ENCODE measurements at regions of chr4 and their contacts with region 1.

Region 1: GRCh38 chr4:95095348-95095974 is 337.7 kb downstream of the BMPR1B start:
- DNase-seq: peak; percentile 71
- ATAC-seq: peak; percentile 19; the same call in 1 of the 2 replicates
- H3K4me3 ChIP-seq: no peak overlapping the region
- H3K27ac ChIP-seq: peak overlapping the region; percentile 97
- H3K4me1 ChIP-seq: peaks cover 48% of the 10 kb centered on the region
- H3K27me3 ChIP-seq: no peaks in the 10 kb centered on the region
- CTCF ChIP-seq: peak; percentile 78

Region 2: GRCh38 chr4:94621491-94622080 is 473.9 kb before region 1 on chr4:
- CTCF ChIA-PET with region 1: no interaction called
- POLR2A ChIA-PET with region 1: no interaction called
- intact Hi-C with region 1: loop called (anchors 1 kb)
- DNase-seq: peak; percentile 67
- ATAC-seq: peak; percentile 24; the same call in 1 of the 2 replicates
- H3K4me3 ChIP-seq: no peak overlapping the region
- H3K27ac ChIP-seq: no peak overlapping the region
- H3K4me1 ChIP-seq: peaks cover 4% of the 10 kb centered on the region; the same call in 1 of the 2 replicates
- H3K27me3 ChIP-seq: no peaks in the 10 kb centered on the region
- CTCF ChIP-seq: peak; percentile 74

Region 3: GRCh38 chr4:94757192-94758139 is 338.0 kb before region 1 on chr4 and contains the start of gene BMPR1B:
- CTCF ChIA-PET with region 1: no interaction called
- POLR2A ChIA-PET with region 1: no interaction called
- intact Hi-C with region 1: loop called (anchors 2 kb)
- DNase-seq: peak; percentile 65
- ATAC-seq: peak; percentile 10; the same call in 1 of the 2 replicates
- H3K4me3 ChIP-seq: peak within 1 kb of the TSS; percentile 94
- H3K27ac ChIP-seq: peak within 1 kb of the TSS; percentile 78
- H3K4me1 ChIP-seq: peaks cover 23% of the 10 kb centered on the region
- H3K27me3 ChIP-seq: no peaks in the 10 kb centered on the region
- CTCF ChIP-seq: no peak
- total RNA-seq, gene BMPR1B: 5.0 and 7.1 TPM in 2 replicates

Region 4: DNA sequence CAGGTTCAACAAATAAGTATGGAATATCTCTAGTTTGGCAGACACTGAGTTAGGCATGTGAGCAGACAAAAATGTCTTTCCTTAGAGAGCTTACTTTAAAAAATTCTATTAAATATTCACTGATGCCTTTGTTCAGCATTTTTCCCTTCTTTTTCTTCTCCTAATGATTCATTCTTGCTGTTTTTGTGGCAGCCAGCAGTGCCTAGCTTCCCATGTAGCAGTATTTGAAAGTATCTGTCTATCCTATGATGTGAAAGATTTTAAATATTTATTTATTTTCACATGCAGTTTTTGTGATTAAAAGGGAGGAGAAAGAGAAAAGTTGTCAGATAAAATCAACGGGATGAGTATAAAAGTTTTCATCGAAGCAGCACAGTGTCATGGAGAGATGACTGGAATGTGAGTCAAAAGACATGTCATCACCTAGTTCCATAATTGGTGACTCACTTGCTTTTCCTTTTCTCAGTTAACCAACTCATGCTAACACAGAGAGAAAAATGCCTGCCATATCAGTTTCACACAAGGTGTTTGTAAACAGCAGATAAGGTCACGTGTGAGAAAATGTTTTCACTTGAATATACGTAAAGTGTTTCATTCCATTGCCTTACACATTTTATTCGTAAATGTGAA is 267.9 kb before region 1 on chr4:
- CTCF ChIA-PET with region 1: no interaction called
- POLR2A ChIA-PET with region 1: no interaction called
- intact Hi-C with region 1: loop called (anchors 2 kb)
- DNase-seq: peak; percentile 84
- ATAC-seq: peak; percentile 98
- H3K4me3 ChIP-seq: peak overlapping the region; percentile 52
- H3K27ac ChIP-seq: peak overlapping the region; percentile 75
- H3K4me1 ChIP-seq: peaks cover 24% of the 10 kb centered on the region
- H3K27me3 ChIP-seq: no peaks in the 10 kb centered on the region
- CTCF ChIP-seq: no peak

Region 5: DNA sequence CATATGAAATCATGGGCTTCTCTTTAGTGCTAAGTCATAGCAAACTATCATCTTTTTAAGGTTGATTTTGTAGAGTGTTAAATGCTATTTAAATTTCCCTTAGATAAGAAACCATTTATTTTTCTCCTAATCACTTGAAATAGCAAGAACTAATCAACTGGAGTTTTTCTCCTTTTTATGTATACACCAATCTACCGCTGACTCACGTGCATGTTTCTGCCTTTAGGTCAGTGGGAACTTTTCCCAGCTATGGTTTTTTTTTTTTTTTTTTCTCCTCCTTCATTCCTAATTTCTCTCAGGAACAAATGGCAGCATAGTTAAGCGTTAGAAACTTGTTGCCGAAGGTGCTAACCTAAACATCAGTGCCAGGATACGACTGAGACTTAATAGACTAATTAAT is 161.3 kb before region 1 on chr4:
- CTCF ChIA-PET with region 1: no interaction called
- POLR2A ChIA-PET with region 1: no interaction called
- intact Hi-C with region 1: loop called (anchors 2 kb)
- DNase-seq: peak; percentile 47
- ATAC-seq: peak; percentile 29
- H3K4me3 ChIP-seq: peak overlapping the region; percentile 43; the same call in 1 of the 2 replicates
- H3K27ac ChIP-seq: peak overlapping the region; percentile 51
- H3K4me1 ChIP-seq: peaks cover 43% of the 10 kb centered on the region
- H3K27me3 ChIP-seq: no peaks in the 10 kb centered on the region
- CTCF ChIP-seq: no peak

Region 6: DNA sequence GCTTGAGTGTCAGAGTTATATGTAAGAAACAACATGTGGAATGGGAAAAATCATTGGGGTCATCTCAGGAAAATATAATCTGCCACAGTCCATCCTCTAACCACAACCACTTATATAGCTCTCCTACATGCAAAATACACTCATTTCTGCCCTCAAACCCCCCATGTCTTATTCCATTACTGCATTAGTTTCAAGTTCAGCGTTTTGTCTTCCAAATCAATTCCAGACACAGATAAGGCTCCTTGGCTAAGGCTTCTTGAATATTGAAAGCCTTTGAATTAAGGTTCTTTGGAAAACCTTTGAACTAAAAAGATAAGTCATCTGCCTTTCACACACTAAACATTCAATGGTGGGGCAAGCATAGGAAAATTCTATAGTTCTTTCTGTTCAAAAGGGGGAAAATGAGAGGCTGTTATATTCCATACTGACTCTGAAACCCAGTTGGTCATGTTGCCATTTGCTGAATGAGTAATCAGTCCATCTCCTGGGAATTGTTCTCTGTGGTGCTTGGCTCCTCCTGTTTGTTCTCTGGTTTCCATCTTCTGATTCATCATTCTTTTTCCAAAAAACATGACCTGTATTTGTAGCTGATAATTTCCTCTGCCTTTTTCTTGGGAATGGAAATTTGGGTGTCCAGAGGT is 119.0 kb before region 1 on chr4:
- CTCF ChIA-PET with region 1: no interaction called
- POLR2A ChIA-PET with region 1: no interaction called
- intact Hi-C with region 1: loop called (anchors 2 kb)
- DNase-seq: peak; percentile 78
- ATAC-seq: peak; percentile 58
- H3K4me3 ChIP-seq: no peak overlapping the region
- H3K27ac ChIP-seq: peak overlapping the region; percentile 96
- H3K4me1 ChIP-seq: peaks cover 34% of the 10 kb centered on the region
- H3K27me3 ChIP-seq: no peaks in the 10 kb centered on the region
- CTCF ChIP-seq: no peak